CD14-positive monocyte (primary cell): ENCODE measurements at regions of chr11 and their contacts with region 1.

Region 1: DNA sequence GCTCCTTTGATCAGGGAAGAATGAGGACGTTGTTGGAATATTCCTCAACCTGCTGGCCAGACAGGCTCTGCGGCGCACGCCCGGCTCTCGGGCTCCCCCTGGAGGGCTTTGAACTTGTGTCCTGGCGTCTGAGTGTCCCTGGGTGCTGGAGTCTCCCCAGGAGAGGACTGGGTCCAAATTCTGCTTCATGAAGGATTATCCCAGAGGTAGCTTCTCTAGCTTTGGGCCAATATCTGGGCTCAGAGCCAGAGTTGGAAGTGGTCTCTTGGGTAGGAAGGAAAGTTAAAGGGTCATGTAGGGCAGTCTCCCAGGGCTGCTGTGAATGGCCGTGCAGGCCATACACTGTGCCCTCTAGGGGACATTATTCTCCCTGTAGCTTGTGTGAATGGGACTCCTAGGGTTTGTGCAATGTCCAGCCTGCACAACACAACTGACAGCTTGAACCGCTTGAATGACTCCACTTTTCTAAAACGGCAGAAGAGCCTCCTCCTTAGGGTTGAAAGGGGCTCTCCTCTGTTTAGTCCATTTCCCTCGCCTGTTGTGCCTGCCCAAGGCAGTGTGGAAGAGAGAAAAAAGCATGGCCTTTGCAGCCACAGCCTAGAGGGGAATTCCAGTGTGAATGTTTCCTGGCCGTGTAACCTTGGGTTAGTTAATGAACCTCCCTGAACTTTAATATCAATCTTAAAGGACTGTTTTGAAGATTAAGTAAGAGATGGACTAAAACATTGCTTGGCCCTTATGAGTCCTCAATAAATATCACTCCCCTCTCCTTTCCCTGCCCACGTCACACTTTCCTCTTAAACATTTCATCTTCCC is 111.2 kb upstream of the THY1 start:
- DNase-seq: peak; percentile 68 to 78 (median 70)
- H3K4me3 ChIP-seq: peak overlapping the region in 1 of 3 experiments; percentile 53
- H3K4me3 Mint-ChIP-seq: peak overlapping the region; percentile 61 to 83
- H3K27ac ChIP-seq: peak overlapping the region in 1 of 2 donors; percentile 72
- H3K27ac Mint-ChIP-seq: peak overlapping the region; percentile 67 to 93 (median 82)
- H3K4me1 ChIP-seq: peaks cover 45 to 61% of the 10 kb centered on the region in 2 donors
- H3K4me1 Mint-ChIP-seq: peaks cover 67% of the 10 kb centered on the region
- H3K27me3 ChIP-seq: no peaks in the 10 kb centered on the region
- H3K27me3 Mint-ChIP-seq: peaks cover 0 to 2% (median 1%) of the 10 kb centered on the region in 3 donors
- CTCF ChIP-seq: peak; percentile 99

Region 2: GRCh38 chr11:119470317-119471291 is 63.5 kb before region 1 on chr11:
- intact Hi-C with region 1: no loop called
- DNase-seq: no peak
- H3K4me3 ChIP-seq: no peak overlapping the region
- H3K4me3 Mint-ChIP-seq: no peak overlapping the region
- H3K27ac ChIP-seq: no peak overlapping the region
- H3K27ac Mint-ChIP-seq: no peak overlapping the region
- H3K4me1 ChIP-seq: no peaks in the 10 kb centered on the region
- H3K4me1 Mint-ChIP-seq: peaks cover 4% of the 10 kb centered on the region
- H3K27me3 ChIP-seq: peaks cover 0 to 10% of the 10 kb centered on the region in 2 donors
- H3K27me3 Mint-ChIP-seq: peaks cover 6 to 19% (median 13%) of the 10 kb centered on the region in 3 donors
- CTCF ChIP-seq: no peak

Region 3: GRCh38 chr11:119481021-119481666 is 53.0 kb before region 1 on chr11:
- intact Hi-C with region 1: loop called (anchors 1 kb)
- DNase-seq: peak; percentile 62 to 80 (median 65)
- H3K4me3 ChIP-seq: no peak overlapping the region
- H3K4me3 Mint-ChIP-seq: no peak overlapping the region
- H3K27ac ChIP-seq: no peak overlapping the region
- H3K27ac Mint-ChIP-seq: no peak overlapping the region
- H3K4me1 ChIP-seq: peaks cover 0 to 2% of the 10 kb centered on the region in 2 donors
- H3K4me1 Mint-ChIP-seq: peaks cover 2% of the 10 kb centered on the region
- H3K27me3 ChIP-seq: no peaks in the 10 kb centered on the region
- H3K27me3 Mint-ChIP-seq: peaks cover 6 to 14% (median 9%) of the 10 kb centered on the region in 3 donors
- CTCF ChIP-seq: peak; percentile 96

Region 4: DNA sequence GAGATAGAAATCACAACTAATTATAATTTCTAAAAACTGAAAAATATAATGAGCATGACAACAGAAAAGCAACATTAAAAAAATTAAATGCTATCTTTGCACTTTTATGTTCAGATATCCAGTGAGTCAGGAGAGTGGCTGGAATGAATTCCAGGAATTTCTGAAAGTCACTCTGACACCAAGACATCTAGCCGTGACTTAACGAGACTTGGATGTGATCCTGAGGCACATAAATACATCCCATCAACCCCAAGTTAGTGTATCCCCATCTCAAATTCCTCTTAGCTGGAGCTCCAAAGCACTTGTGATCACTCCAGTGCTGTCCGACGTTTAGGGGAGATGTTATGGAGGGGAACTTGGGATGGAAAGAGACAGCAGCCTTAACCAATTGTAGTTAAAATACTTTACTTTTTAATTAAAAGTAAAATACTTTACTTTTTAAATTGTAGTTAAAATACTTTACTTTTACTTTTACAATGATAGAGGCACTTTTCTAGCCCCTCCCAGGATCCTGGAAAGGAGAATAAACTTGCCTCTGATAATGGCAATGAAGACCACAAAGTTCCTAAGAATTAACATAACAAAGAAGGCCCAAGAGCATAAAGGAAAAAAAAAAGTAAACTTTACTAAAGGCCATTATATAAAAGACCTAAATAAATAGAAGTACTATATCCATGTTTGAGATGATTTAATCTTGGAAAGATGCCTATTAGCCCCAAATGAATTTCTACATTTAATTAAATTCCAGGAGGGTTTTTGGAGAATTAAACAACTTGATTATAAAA is 17.8 kb after region 1 on chr11:
- intact Hi-C with region 1: no loop called
- DNase-seq: no peak
- H3K4me3 ChIP-seq: no peak overlapping the region
- H3K4me3 Mint-ChIP-seq: no peak overlapping the region
- H3K27ac ChIP-seq: no peak overlapping the region
- H3K27ac Mint-ChIP-seq: no peak overlapping the region
- H3K4me1 ChIP-seq: peaks cover 7 to 8% of the 10 kb centered on the region in 2 donors
- H3K4me1 Mint-ChIP-seq: peaks cover 13% of the 10 kb centered on the region
- H3K27me3 ChIP-seq: no peaks in the 10 kb centered on the region
- H3K27me3 Mint-ChIP-seq: peaks cover 0 to 2% (median 0%) of the 10 kb centered on the region in 3 donors
- CTCF ChIP-seq: no peak

Region 5: GRCh38 chr11:119567688-119568582 is 33.8 kb after region 1 on chr11:
- intact Hi-C with region 1: loop called (anchors 2 to 5 kb)
- DNase-seq: no peak
- H3K4me3 ChIP-seq: no peak overlapping the region
- H3K4me3 Mint-ChIP-seq: no peak overlapping the region
- H3K27ac ChIP-seq: no peak overlapping the region
- H3K27ac Mint-ChIP-seq: no peak overlapping the region
- H3K4me1 ChIP-seq: peaks cover 18 to 34% of the 10 kb centered on the region in 2 donors
- H3K4me1 Mint-ChIP-seq: peaks cover 26% of the 10 kb centered on the region
- H3K27me3 ChIP-seq: no peaks in the 10 kb centered on the region
- H3K27me3 Mint-ChIP-seq: peaks cover 0 to 5% (median 5%) of the 10 kb centered on the region in 3 donors
- CTCF ChIP-seq: no peak

Region 6: DNA sequence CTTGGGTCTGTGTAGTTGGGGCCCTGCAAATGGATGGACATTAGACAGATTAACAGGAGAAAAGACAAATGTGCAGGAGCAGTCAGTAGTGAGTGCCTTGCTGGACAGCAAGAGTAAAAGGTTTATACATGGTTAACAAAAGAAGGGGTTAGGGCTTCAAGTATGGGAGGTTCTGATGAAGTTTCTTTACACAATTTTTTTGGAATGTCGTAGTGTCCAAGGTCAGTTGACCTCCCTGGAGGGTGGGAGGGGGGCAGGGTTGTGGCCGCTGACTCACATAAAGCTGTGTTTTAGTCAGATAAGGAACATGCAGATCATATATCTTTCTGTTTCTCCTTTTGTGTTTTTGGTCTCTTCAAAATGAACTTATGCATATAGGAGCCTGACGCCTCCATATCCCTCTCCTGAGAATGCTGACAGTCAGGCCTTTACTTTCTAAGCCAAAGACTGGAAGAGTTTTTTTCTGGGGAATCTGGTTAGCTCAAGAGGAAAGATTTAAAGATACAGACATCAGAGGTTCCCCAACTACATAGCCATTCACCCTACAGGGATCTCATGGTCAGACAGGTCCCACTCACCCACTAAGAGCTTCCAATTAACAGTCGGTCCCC is 60.6 kb after region 1 on chr11:
- intact Hi-C with region 1: no loop called
- DNase-seq: peak; percentile 31 to 56 (median 54)
- H3K4me3 ChIP-seq: no peak overlapping the region
- H3K4me3 Mint-ChIP-seq: no peak overlapping the region
- H3K27ac ChIP-seq: no peak overlapping the region
- H3K27ac Mint-ChIP-seq: peak overlapping the region in 4 of 7 donors; percentile 16 to 85 (median 50)
- H3K4me1 ChIP-seq: peaks cover 12 to 36% of the 10 kb centered on the region in 2 donors
- H3K4me1 Mint-ChIP-seq: peaks cover 29% of the 10 kb centered on the region
- H3K27me3 ChIP-seq: no peaks in the 10 kb centered on the region
- H3K27me3 Mint-ChIP-seq: peaks cover 0 to 4% (median 2%) of the 10 kb centered on the region in 3 donors
- CTCF ChIP-seq: no peak

Region 7: DNA sequence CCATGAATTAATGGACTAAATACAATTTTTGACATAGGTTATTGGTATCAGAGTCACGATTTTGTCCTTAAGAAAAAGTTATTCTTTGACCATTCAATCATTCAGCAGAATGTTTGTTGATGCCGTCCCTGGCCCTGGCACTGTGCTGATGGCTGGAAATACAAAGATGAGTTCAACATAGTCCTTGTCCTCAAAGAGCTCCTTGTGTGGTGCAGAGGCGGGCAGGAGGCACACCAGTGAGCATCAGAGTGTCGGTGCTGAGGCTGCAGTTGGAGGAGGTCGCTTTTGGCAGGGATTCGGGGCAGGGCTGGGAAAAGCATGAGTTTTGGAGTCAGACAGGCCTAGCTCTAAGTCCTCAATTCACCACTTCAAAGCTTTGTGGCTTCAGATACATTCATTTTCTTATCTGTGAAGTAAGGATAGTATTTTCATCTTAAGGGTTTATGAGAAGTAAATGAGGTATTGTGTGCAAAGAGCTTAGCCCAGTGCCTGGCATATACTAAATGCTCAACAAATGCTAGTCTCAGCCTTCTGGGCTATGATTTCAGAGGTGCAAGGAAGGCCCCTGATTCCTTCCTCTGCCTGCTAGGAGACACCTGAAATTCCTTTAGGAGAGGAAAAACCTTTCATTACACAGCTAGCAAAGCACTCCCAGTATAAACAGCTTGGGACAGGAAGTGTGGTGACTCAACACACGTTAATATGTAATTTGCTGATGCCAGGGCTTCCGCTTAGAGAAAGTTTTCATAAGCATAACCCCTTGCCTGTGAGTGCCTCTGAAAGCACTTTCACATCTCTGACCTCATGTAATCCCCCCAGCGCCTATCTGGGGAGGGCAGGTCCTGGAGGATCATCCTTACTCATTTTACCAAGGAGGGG is 81.1 kb after region 1 on chr11:
- intact Hi-C with region 1: loop called (anchors 5 kb)
- DNase-seq: peak; percentile 59 to 89 (median 85)
- H3K4me3 ChIP-seq: peak overlapping the region in 1 of 3 experiments; percentile 27
- H3K4me3 Mint-ChIP-seq: peak overlapping the region in 1 of 2 donors; percentile 67
- H3K27ac ChIP-seq: peak overlapping the region; percentile 83 to 88
- H3K27ac Mint-ChIP-seq: peak overlapping the region; percentile 88 to 96 (median 94)
- H3K4me1 ChIP-seq: peaks cover 49% of the 10 kb centered on the region in 2 donors
- H3K4me1 Mint-ChIP-seq: peaks cover 51% of the 10 kb centered on the region
- H3K27me3 ChIP-seq: no peaks in the 10 kb centered on the region
- H3K27me3 Mint-ChIP-seq: peaks cover 0 to 7% (median 0%) of the 10 kb centered on the region in 3 donors
- CTCF ChIP-seq: no peak